ENCODE measurements at regions of chr3 and their contacts with region 1.

Region 1: GRCh38 chr3:11643605-11644087 is at the start of gene VGLL4:
- DNase-seq: peak; percentile 87 to 92 (median 88)
- ATAC-seq: peak; percentile 89
- H3K4me3 ChIP-seq: peak within 1 kb of the TSS; percentile 56
- H3K4me1 ChIP-seq: peaks cover 23% of the 10 kb centered on the region
- CTCF ChIP-seq: no peak
- total RNA-seq, gene VGLL4: 42.5 to 51.3 (median 46.4) TPM

Region 2: DNA sequence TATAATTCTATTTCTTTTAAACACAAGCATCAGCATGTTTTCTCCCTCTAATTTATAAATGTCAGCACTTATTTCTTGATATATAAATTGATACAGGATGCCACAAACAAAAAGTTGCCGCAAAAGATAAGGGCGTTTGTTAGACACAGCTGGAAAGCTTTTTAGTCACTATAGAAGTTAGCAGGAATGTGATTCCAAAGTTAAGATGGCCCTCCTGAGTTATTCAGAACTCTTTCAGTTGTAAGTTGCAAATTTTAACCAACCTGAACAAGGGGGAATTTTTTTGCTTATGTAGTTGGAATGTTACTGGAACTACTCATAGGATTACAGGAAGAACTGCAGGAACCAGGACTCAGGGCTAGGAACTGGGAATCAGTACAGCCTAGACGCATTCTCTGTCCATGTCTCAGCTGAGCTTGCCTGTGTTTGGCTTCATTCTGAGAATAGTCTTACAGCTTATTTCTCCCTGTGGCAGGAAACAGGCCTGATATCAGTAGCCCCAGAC is 166.2 kb before region 1 on chr3:
- intact Hi-C with region 1: loop called in 1 of 2 experiments (anchors 10 kb)
- DNase-seq: no peak
- ATAC-seq: peak; percentile 28
- H3K4me3 ChIP-seq: no peak overlapping the region
- H3K4me1 ChIP-seq: peaks cover 12% of the 10 kb centered on the region
- CTCF ChIP-seq: no peak

Region 3: DNA sequence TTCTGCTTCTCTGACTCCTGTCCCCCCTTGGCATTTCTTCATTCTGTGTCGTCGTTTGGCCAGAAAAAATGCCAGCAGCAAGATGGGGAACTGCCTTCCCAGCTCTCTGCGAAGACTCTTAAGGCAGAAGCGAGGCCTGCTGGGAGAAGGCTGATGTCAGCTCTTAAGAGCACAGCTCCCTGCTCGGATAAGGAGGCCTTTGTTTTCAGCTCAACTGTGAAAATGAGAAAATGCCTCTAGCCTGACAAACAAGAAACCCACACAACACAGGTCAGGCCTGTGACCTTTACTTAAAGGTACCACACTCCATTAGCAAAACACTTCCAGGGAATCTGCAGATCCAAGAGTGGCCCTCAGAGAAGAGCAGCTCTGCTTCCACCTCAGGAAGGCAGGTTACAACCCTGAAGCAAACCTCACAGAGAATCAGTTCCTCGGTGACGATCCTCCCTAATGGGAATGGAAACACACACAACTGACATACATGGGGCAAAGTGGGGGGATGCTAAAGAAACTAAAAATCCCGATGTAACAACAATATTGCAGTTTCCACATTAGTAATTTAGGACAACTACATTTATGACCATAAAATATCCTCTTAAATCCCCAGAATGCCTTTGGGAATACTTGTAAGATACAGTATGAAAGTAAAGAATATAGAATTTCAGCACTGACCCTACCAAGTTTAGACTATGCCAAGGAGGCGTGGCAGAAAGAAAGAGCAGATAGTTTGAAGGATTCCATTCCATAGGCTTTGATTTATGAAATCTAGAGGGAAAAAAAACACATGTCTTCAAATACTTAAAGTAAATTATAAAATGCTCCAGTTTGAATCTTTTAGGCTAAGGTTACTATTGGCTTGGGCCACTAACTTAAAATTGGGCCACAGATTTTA is 52.0 kb before region 1 on chr3:
- intact Hi-C with region 1: loop called in 1 of 2 experiments (anchors 10 kb)
- DNase-seq: peak in 1 of 3 donors; percentile 31
- ATAC-seq: peak; percentile 60
- H3K4me3 ChIP-seq: no peak overlapping the region
- H3K4me1 ChIP-seq: peaks cover 13% of the 10 kb centered on the region
- CTCF ChIP-seq: no peak